Heart right ventricle (tissue), 16 donors: ENCODE measurements at regions of chr3 and their contacts with region 1.

Region 1: DNA sequence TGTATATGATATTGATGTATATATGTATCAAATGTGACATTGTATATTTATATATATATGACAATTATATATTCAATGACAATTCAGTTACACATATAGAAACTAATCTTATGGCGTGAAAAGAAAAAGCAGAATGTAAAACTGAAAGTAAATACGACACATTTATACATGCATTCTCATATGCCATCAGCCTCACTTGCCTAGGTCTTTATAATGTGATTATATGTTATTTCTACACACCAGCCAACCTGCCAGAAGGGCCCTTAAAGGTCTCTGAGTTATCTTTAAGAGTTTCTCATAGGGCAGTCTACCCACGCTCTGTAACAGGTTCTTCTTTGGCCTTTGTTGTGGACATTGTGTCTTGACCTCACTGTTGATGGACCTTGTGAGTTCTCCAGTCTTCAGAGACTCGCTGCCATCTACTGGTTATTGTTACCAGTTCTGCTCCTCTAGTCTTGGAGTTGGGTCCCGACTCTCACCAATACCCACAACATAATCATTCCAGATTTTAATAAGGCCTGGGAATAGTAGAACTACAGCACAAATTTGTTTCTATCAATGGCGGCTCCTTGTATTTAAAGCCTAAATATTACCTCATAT is 371.5 kb upstream of the GOLIM4 start:
- DNase-seq: peak in 1 of 2 donors; percentile 23
- ATAC-seq: peak in 7 of 8 donors; percentile 61 to 81 (median 70)
- H3K4me3 ChIP-seq: peak overlapping the region in 1 of 10 donors; percentile 21
- H3K27ac ChIP-seq: no peak overlapping the region
- H3K4me1 ChIP-seq: no peaks in the 10 kb centered on the region
- H3K27me3 ChIP-seq: no peaks in the 10 kb centered on the region
- CTCF ChIP-seq: peak; percentile 11 to 64 (median 50)

Region 2: GRCh38 chr3:168213920-168214319 is 253.3 kb before region 1 on chr3:
- intact Hi-C with region 1: loop called (anchors 1 to 10 kb)
- DNase-seq: no peak
- ATAC-seq: no peak
- H3K4me3 ChIP-seq: no peak overlapping the region
- H3K27ac ChIP-seq: no peak overlapping the region
- H3K4me1 ChIP-seq: peaks cover 0 to 13% (median 0%) of the 10 kb centered on the region in 9 donors
- H3K27me3 ChIP-seq: no peaks in the 10 kb centered on the region
- CTCF ChIP-seq: no peak

Region 3: GRCh38 chr3:168405288-168405687 is 61.9 kb before region 1 on chr3:
- intact Hi-C with region 1: no loop called
- DNase-seq: no peak
- ATAC-seq: no peak
- H3K4me3 ChIP-seq: no peak overlapping the region
- H3K27ac ChIP-seq: no peak overlapping the region
- H3K4me1 ChIP-seq: no peaks in the 10 kb centered on the region
- H3K27me3 ChIP-seq: no peaks in the 10 kb centered on the region
- CTCF ChIP-seq: no peak

Region 4: GRCh38 chr3:168431451-168431850 is 35.8 kb before region 1 on chr3:
- intact Hi-C with region 1: no loop called
- DNase-seq: no peak
- ATAC-seq: no peak
- H3K4me3 ChIP-seq: no peak overlapping the region
- H3K27ac ChIP-seq: no peak overlapping the region
- H3K4me1 ChIP-seq: no peaks in the 10 kb centered on the region
- H3K27me3 ChIP-seq: no peaks in the 10 kb centered on the region
- CTCF ChIP-seq: no peak

Region 5: GRCh38 chr3:168604767-168605166 is 137.6 kb after region 1 on chr3:
- intact Hi-C with region 1: no loop called
- DNase-seq: no peak
- ATAC-seq: no peak
- H3K4me3 ChIP-seq: no peak overlapping the region
- H3K27ac ChIP-seq: no peak overlapping the region
- H3K4me1 ChIP-seq: no peaks in the 10 kb centered on the region
- H3K27me3 ChIP-seq: peaks cover 0 to 20% (median 3%) of the 10 kb centered on the region in 7 donors
- CTCF ChIP-seq: no peak